ENCODE measurements at regions of chr6 and their contacts with region 1.

Region 1: DNA sequence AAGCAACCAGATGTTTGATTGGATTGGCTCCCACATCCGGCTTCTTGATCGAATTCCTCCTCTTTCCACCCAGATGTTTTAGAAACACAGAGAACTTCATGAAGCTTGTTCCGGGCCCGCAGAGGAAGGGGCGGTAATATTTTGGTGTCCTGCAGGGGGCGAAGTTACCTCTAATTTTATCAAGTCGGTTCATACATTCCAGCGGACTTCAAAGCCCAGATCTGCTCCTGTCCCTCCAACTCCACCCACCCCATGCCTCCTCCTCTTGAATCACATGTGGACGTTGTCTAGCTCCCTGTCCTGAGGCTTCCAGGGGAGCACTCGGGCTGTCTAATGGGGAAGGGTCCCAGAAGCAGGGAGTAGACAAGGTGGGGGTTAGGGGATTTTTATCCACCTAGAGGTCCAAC is 2.9 kb upstream of the BMP6 start:
- DNase-seq: peak; percentile 70
- H3K4me3 ChIP-seq: no peak overlapping the region
- H3K27ac ChIP-seq: no peak overlapping the region
- H3K4me1 ChIP-seq: peaks cover 4% of the 10 kb centered on the region
- H3K27me3 ChIP-seq: no peaks in the 10 kb centered on the region
- CTCF ChIP-seq: peak; percentile 24 to 59 (median 56)
- POLR2A ChIP-seq: no peak

Region 2: GRCh38 chr6:7463785-7464184 is 259.3 kb before region 1 on chr6:
- intact Hi-C with region 1: no loop called
- DNase-seq: no peak
- H3K4me3 ChIP-seq: no peak overlapping the region
- H3K27ac ChIP-seq: no peak overlapping the region
- H3K4me1 ChIP-seq: no peaks in the 10 kb centered on the region
- H3K27me3 ChIP-seq: no peaks in the 10 kb centered on the region
- CTCF ChIP-seq: no peak
- POLR2A ChIP-seq: no peak

Region 3: GRCh38 chr6:7910654-7911344 is 187.8 kb after region 1 on chr6 and contains the start of gene TXNDC5:
- intact Hi-C with region 1: loop called (anchors 5 kb)
- DNase-seq: peak; percentile 67
- H3K4me3 ChIP-seq: peak within 1 kb of the TSS; percentile 79 to 83
- H3K27ac ChIP-seq: peak within 1 kb of the TSS; percentile 63 to 66
- H3K4me1 ChIP-seq: no peaks in the 10 kb centered on the region
- H3K27me3 ChIP-seq: no peaks in the 10 kb centered on the region
- CTCF ChIP-seq: no peak
- POLR2A ChIP-seq: no peak
- total RNA-seq, gene TXNDC5: 123 to 128 TPM

Region 4: GRCh38 chr6:7992002-7992815 is 269.2 kb after region 1 on chr6:
- intact Hi-C with region 1: loop called (anchors 5 kb)
- DNase-seq: no peak
- H3K4me3 ChIP-seq: no peak overlapping the region
- H3K27ac ChIP-seq: no peak overlapping the region
- H3K4me1 ChIP-seq: no peaks in the 10 kb centered on the region
- H3K27me3 ChIP-seq: no peaks in the 10 kb centered on the region
- CTCF ChIP-seq: peak in 3 of 4 experiments; percentile 40 to 52 (median 51)
- POLR2A ChIP-seq: no peak

Region 5: GRCh38 chr6:8063761-8064637 is 341.0 kb after region 1 on chr6 and contains the start of gene BLOC1S5:
- intact Hi-C with region 1: loop called (anchors 2 kb)
- DNase-seq: peak; percentile 96
- H3K4me3 ChIP-seq: peak within 1 kb of the TSS; percentile 59 to 81
- H3K27ac ChIP-seq: peak within 1 kb of the TSS; percentile 83
- H3K4me1 ChIP-seq: no peaks in the 10 kb centered on the region
- H3K27me3 ChIP-seq: no peaks in the 10 kb centered on the region
- CTCF ChIP-seq: peak in 2 of 4 experiments; percentile 44
- POLR2A ChIP-seq: peak; percentile 64
- total RNA-seq, gene BLOC1S5: 9.5 to 13.0 TPM

Measured in prostate gland (tissue), 2 donors.